B cell (primary cell): ENCODE measurements at regions of chr11 and their contacts with region 1.

Region 1: GRCh38 chr11:73177778-73178577 is 35.9 kb upstream of the FCHSD2 start:
- DNase-seq: peak; percentile 88
- ATAC-seq: peak; percentile 99
- H3K4me3 ChIP-seq: peak overlapping the region in 1 of 5 experiments; percentile 16
- H3K4me3 Mint-ChIP-seq: peak overlapping the region; percentile 37
- H3K27ac ChIP-seq: peak overlapping the region; percentile 17 to 19
- H3K27ac Mint-ChIP-seq: peak overlapping the region; percentile 81
- H3K4me1 ChIP-seq: peaks cover 32 to 40% of the 10 kb centered on the region in 2 donors
- H3K4me1 Mint-ChIP-seq: peaks cover 38% of the 10 kb centered on the region
- H3K27me3 ChIP-seq: no peaks in the 10 kb centered on the region
- H3K27me3 Mint-ChIP-seq: no peaks in the 10 kb centered on the region
- CTCF ChIP-seq: peak; percentile 93

Region 2: GRCh38 chr11:72736452-72737069 is 441.4 kb before region 1 on chr11:
- CTCF ChIA-PET with region 1: interaction called, 4 read pairs
- POLR2A ChIA-PET with region 1: no interaction called
- intact Hi-C with region 1: loop called (anchors 5 kb)
- DNase-seq: peak; percentile 87
- ATAC-seq: peak; percentile 42
- H3K4me3 ChIP-seq: peak overlapping the region in 4 of 5 experiments; percentile 13 to 67 (median 42)
- H3K4me3 Mint-ChIP-seq: peak overlapping the region; percentile 86
- H3K27ac ChIP-seq: peak overlapping the region; percentile 97 to 99
- H3K27ac Mint-ChIP-seq: peak overlapping the region; percentile 99
- H3K4me1 ChIP-seq: peaks cover 76 to 87% of the 10 kb centered on the region in 2 donors
- H3K4me1 Mint-ChIP-seq: peaks cover 83% of the 10 kb centered on the region
- H3K27me3 ChIP-seq: no peaks in the 10 kb centered on the region
- H3K27me3 Mint-ChIP-seq: no peaks in the 10 kb centered on the region
- CTCF ChIP-seq: no peak

Region 3: DNA sequence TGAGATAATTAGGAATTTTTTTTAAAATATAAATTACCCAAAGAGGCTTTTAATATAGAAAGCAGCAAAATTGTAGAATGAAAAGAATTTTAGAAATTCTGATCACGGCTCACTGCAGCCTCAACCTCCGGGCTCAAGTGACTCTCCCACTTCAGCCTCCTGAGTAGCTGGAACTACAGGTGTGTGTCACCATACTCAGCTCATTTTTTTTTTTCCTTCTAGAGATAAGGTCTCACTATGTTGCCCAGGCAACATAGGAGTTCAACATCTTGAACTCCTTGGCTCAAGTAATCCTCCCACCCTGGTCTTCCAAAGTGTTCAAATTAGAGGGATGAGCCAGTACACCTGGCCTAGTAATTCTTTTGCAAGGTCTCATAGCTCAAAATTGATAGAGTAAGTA is 287.1 kb before region 1 on chr11:
- CTCF ChIA-PET with region 1: interaction called, 15 read pairs
- POLR2A ChIA-PET with region 1: no interaction called
- intact Hi-C with region 1: no loop called
- DNase-seq: no peak
- ATAC-seq: no peak
- H3K4me3 ChIP-seq: no peak overlapping the region
- H3K4me3 Mint-ChIP-seq: no peak overlapping the region
- H3K27ac ChIP-seq: peak overlapping the region in 1 of 2 donors; percentile 22
- H3K27ac Mint-ChIP-seq: peak overlapping the region; percentile 50
- H3K4me1 ChIP-seq: no peaks in the 10 kb centered on the region
- H3K4me1 Mint-ChIP-seq: no peaks in the 10 kb centered on the region
- H3K27me3 ChIP-seq: no peaks in the 10 kb centered on the region
- H3K27me3 Mint-ChIP-seq: no peaks in the 10 kb centered on the region
- CTCF ChIP-seq: no peak

Region 4: GRCh38 chr11:72985645-72986044 is 192.3 kb before region 1 on chr11:
- CTCF ChIA-PET with region 1: interaction called, 19 read pairs
- POLR2A ChIA-PET with region 1: no interaction called
- intact Hi-C with region 1: no loop called
- DNase-seq: no peak
- ATAC-seq: no peak
- H3K4me3 ChIP-seq: no peak overlapping the region
- H3K4me3 Mint-ChIP-seq: no peak overlapping the region
- H3K27ac ChIP-seq: peak overlapping the region in 1 of 2 donors; percentile 58
- H3K27ac Mint-ChIP-seq: peak overlapping the region; percentile 87
- H3K4me1 ChIP-seq: peaks cover 28 to 44% of the 10 kb centered on the region in 2 donors
- H3K4me1 Mint-ChIP-seq: peaks cover 60% of the 10 kb centered on the region
- H3K27me3 ChIP-seq: no peaks in the 10 kb centered on the region
- H3K27me3 Mint-ChIP-seq: no peaks in the 10 kb centered on the region
- CTCF ChIP-seq: no peak

Region 5: GRCh38 chr11:73141848-73142286 is 36.1 kb before region 1 on chr11:
- CTCF ChIA-PET with region 1: interaction called, 248 read pairs
- POLR2A ChIA-PET with region 1: interaction called, 62 read pairs
- intact Hi-C with region 1: loop called (anchors 1 kb)
- DNase-seq: peak; percentile 87
- ATAC-seq: peak; percentile 26
- H3K4me3 ChIP-seq: peak overlapping the region; percentile 84 to 98 (median 95)
- H3K4me3 Mint-ChIP-seq: peak overlapping the region; percentile 100
- H3K27ac ChIP-seq: peak overlapping the region; percentile 89 to 93
- H3K27ac Mint-ChIP-seq: peak overlapping the region; percentile 99
- H3K4me1 ChIP-seq: peaks cover 65 to 71% of the 10 kb centered on the region in 2 donors
- H3K4me1 Mint-ChIP-seq: peaks cover 76% of the 10 kb centered on the region
- H3K27me3 ChIP-seq: no peaks in the 10 kb centered on the region
- H3K27me3 Mint-ChIP-seq: no peaks in the 10 kb centered on the region
- CTCF ChIP-seq: no peak

Region 6: GRCh38 chr11:73242251-73243079 is 64.5 kb after region 1 on chr11:
- CTCF ChIA-PET with region 1: interaction called, 281 read pairs
- POLR2A ChIA-PET with region 1: no interaction called
- intact Hi-C with region 1: no loop called
- DNase-seq: peak; percentile 81
- ATAC-seq: peak; percentile 89
- H3K4me3 ChIP-seq: no peak overlapping the region
- H3K4me3 Mint-ChIP-seq: no peak overlapping the region
- H3K27ac ChIP-seq: no peak overlapping the region
- H3K27ac Mint-ChIP-seq: no peak overlapping the region
- H3K4me1 ChIP-seq: peaks cover 4 to 7% of the 10 kb centered on the region in 2 donors
- H3K4me1 Mint-ChIP-seq: peaks cover 6% of the 10 kb centered on the region
- H3K27me3 ChIP-seq: peaks cover 0 to 2% (median 0%) of the 10 kb centered on the region in 4 experiments
- H3K27me3 Mint-ChIP-seq: peaks cover 3% of the 10 kb centered on the region
- CTCF ChIP-seq: peak; percentile 79